Activated CD4-positive, alpha-beta memory T cell treated with anti-CD3 and anti-CD28 coated beads for 36 hours (primary cell): ENCODE measurements at regions of chr14 and their contacts with region 1.

Region 1: DNA sequence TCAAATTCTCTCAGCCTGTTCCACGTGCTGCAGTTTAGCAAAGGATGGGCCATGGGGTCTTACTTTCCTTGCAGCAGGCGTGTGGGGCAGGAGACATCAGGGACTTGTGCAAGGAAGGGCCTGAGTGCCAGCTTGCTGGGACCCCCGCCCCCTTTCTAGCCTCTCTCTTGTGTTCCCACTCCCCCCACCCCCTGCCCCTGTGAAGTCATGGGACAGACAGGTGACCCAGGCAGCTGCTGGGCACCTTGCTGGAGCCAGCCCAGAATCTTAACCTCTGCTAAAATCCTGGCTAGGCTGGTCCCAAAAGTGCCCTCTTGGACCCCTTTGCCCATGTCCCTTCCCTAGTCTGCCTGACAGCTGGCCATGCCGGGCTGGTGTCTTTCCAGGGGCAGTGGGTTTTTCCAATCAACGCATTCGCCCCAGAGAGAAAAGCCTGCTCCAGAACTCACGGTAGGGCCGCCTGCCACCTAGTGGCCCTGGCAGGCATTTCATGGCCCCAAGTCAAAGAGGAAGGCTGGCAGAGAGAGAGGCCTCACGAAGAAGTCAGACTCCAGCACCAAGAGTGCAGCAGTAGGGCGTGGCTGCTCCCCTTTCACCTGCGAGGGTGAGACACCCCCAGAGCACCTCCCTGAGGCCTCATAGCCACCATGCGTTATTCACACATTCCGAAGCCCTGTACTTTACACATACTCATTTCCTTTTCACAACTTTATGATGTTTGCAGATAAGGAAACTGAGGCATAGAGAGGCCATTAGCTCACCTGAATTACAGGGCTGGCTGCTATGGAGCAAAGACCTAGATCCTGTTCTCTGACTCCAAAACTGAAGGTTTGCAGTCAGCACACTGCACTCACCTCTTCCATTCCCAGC is 67.4 kb downstream of the LGMN start:
- DNase-seq: peak; percentile 85
- H3K4me3 Mint-ChIP-seq: no peak overlapping the region
- H3K27ac Mint-ChIP-seq: peak overlapping the region; percentile 45
- H3K4me1 Mint-ChIP-seq: peaks cover 32% of the 10 kb centered on the region
- H3K27me3 Mint-ChIP-seq: no peaks in the 10 kb centered on the region

Region 2: GRCh38 chr14:92135267-92135666 is 545.7 kb before region 1 on chr14:
- CTCF ChIA-PET with region 1: interaction called, 15 read pairs
- POLR2A ChIA-PET with region 1: no interaction called
- intact Hi-C with region 1: no loop called
- DNase-seq: no peak
- H3K4me3 Mint-ChIP-seq: no peak overlapping the region
- H3K27ac Mint-ChIP-seq: no peak overlapping the region
- H3K4me1 Mint-ChIP-seq: no peaks in the 10 kb centered on the region
- H3K27me3 Mint-ChIP-seq: no peaks in the 10 kb centered on the region

Region 3: DNA sequence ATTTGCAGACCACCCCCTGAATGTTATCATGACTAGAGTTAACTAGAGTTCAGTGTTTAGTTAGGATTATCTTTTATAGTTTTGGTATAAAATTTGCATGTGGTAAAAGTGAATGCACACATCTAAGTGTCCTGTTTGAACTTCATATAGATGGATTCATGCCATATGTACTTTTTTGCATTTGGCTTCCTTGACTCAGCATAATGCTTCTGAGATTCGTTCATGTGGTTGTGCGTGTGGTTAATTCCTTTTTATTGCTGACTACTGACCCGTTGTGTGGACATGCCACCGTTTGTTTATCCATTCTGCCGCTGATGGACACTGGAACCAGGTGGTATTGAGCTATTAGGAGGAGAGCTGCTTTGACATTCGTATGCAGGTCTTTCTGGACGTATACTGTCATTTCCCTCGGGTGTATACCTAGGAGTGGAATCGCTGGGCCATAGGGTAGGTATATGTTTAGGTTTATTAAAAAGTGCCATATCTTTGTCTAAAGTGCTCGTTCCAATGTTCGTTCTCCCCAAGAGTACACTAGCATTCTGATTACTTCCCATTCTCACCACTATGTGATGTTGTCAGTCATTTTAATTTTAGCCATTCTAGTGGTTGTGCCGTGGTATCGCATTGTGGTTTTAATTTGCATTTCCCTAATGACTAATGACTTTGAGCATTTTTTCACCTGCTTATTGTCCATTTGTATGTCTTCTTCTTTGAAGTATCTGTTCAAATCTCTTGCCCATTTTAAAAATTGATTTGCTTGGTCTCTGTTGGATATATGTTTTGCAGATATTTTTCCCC is 129.8 kb before region 1 on chr14:
- CTCF ChIA-PET with region 1: interaction called, 12 read pairs
- POLR2A ChIA-PET with region 1: no interaction called
- intact Hi-C with region 1: loop called (anchors 1 kb)
- DNase-seq: no peak
- H3K4me3 Mint-ChIP-seq: no peak overlapping the region
- H3K27ac Mint-ChIP-seq: no peak overlapping the region
- H3K4me1 Mint-ChIP-seq: peaks cover 24% of the 10 kb centered on the region
- H3K27me3 Mint-ChIP-seq: peaks cover 4% of the 10 kb centered on the region

Region 4: GRCh38 chr14:92585981-92586937 is 94.8 kb before region 1 on chr14:
- CTCF ChIA-PET with region 1: interaction called, 5 read pairs
- POLR2A ChIA-PET with region 1: interaction called, 3 read pairs
- intact Hi-C with region 1: loop called (anchors 1 kb)
- DNase-seq: peak; percentile 34
- H3K4me3 Mint-ChIP-seq: peak overlapping the region; percentile 25
- H3K27ac Mint-ChIP-seq: peak overlapping the region; percentile 66
- H3K4me1 Mint-ChIP-seq: peaks cover 69% of the 10 kb centered on the region
- H3K27me3 Mint-ChIP-seq: no peaks in the 10 kb centered on the region

Region 5: GRCh38 chr14:92670160-92670559 is 10.9 kb before region 1 on chr14:
- CTCF ChIA-PET with region 1: interaction called, 9 read pairs
- POLR2A ChIA-PET with region 1: interaction called, 4 read pairs
- intact Hi-C with region 1: loop called (anchors 1 kb)
- DNase-seq: no peak
- H3K4me3 Mint-ChIP-seq: no peak overlapping the region
- H3K27ac Mint-ChIP-seq: peak overlapping the region; percentile 60
- H3K4me1 Mint-ChIP-seq: peaks cover 71% of the 10 kb centered on the region
- H3K27me3 Mint-ChIP-seq: no peaks in the 10 kb centered on the region

Region 6: GRCh38 chr14:93086441-93087055 is 405.5 kb after region 1 on chr14:
- CTCF ChIA-PET with region 1: no interaction called
- POLR2A ChIA-PET with region 1: no interaction called
- intact Hi-C with region 1: no loop called
- DNase-seq: peak; percentile 16
- H3K4me3 Mint-ChIP-seq: no peak overlapping the region
- H3K27ac Mint-ChIP-seq: peak overlapping the region; percentile 18
- H3K4me1 Mint-ChIP-seq: peaks cover 23% of the 10 kb centered on the region
- H3K27me3 Mint-ChIP-seq: no peaks in the 10 kb centered on the region